ENCODE measurements at regions of chr6 and their contacts with region 1.

Region 1: GRCh38 chr6:41976794-41977484 is 35.3 kb upstream of the CCND3 start:
- DNase-seq: no peak
- H3K4me3 Mint-ChIP-seq: no peak overlapping the region
- H3K27ac Mint-ChIP-seq: peak overlapping the region; percentile 78
- H3K4me1 Mint-ChIP-seq: peaks cover 65% of the 10 kb centered on the region
- H3K27me3 Mint-ChIP-seq: no peaks in the 10 kb centered on the region

Region 2: DNA sequence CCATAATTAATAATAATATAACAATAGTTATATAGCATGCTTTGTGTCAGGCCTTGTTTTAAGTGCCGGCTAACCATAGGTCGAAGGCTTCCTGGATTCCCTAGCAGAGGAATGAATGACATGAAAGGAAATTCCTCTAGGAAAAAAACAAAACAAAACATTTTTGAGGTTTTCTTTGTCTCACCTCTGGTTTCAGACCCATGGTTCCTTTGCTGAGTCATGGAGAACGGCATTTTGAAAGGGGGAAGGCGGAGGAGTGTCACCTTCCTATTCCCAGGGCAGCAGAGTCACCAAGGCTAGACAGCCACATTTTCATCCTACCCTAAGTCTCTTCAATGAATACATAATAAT is 10.0 kb before region 1 on chr6:
- CTCF ChIA-PET with region 1: interaction called, 32 read pairs
- POLR2A ChIA-PET with region 1: interaction called, 3 read pairs
- DNase-seq: no peak
- H3K4me3 Mint-ChIP-seq: no peak overlapping the region
- H3K27ac Mint-ChIP-seq: no peak overlapping the region
- H3K4me1 Mint-ChIP-seq: peaks cover 59% of the 10 kb centered on the region
- H3K27me3 Mint-ChIP-seq: no peaks in the 10 kb centered on the region